ENCODE measurements at regions of chr20 and their contacts with region 1.

Region 1: GRCh38 chr20:48586760-48587129 is 241.1 kb downstream of the PREX1 start:
- DNase-seq: no peak
- H3K4me3 ChIP-seq: no peak overlapping the region
- H3K27me3 ChIP-seq: peaks cover 7% of the 10 kb centered on the region; the same call in 1 of the 2 replicates
- CTCF ChIP-seq: no peak

Region 2: GRCh38 chr20:47792021-47792618 is 794.6 kb before region 1 on chr20:
- CTCF ChIA-PET with region 1: no interaction called
- POLR2A ChIA-PET with region 1: interaction called, 17 read pairs
- DNase-seq: peak; percentile 79
- H3K4me3 ChIP-seq: no peak overlapping the region
- H3K27me3 ChIP-seq: peaks cover 5% of the 10 kb centered on the region; the same call in 1 of the 2 replicates
- CTCF ChIP-seq: no peak

Measured in BJ (cell line).